Activated T-helper 1 cell treated with anti-CD3 and anti-CD28 coated beads, Interleukin-12 subunit alpha, Interleukin-12 subunit beta, Interleukin-2, Interleukin-4 antibody, amounts not matched to agents 30 ng/mL and 10 ng/mL and 1 ng/mL, durations not matched to agents 14 hours and 24 hours and 36 hours (primary cell): ENCODE measurements at regions of chr11 and their contacts with region 1.

Region 1: GRCh38 chr11:66480117-66480938 is at the start of gene DPP3:
- DNase-seq: peak; percentile 96
- H3K4me3 Mint-ChIP-seq: peak within 1 kb of the TSS; percentile 89
- H3K27ac Mint-ChIP-seq: peak within 1 kb of the TSS; percentile 82
- H3K4me1 Mint-ChIP-seq: peaks cover 44% of the 10 kb centered on the region
- H3K27me3 Mint-ChIP-seq: no peaks in the 10 kb centered on the region
- total RNA-seq, gene DPP3: 102 and 112 TPM in 2 replicates

Region 2: GRCh38 chr11:65859200-65859811 is 621.0 kb before region 1 on chr11:
- intact Hi-C with region 1: no loop called
- DNase-seq: peak; percentile 97
- H3K4me3 Mint-ChIP-seq: peak overlapping the region; percentile 96
- H3K27ac Mint-ChIP-seq: peak overlapping the region; percentile 99
- H3K4me1 Mint-ChIP-seq: peaks cover 49% of the 10 kb centered on the region
- H3K27me3 Mint-ChIP-seq: no peaks in the 10 kb centered on the region

Region 3: GRCh38 chr11:66466225-66467027 is 13.9 kb before region 1 on chr11 and contains the start of gene PELI3:
- intact Hi-C with region 1: loop called (anchors 1 kb)
- DNase-seq: peak; percentile 86
- H3K4me3 Mint-ChIP-seq: peak within 1 kb of the TSS; percentile 94
- H3K27ac Mint-ChIP-seq: peak within 1 kb of the TSS; percentile 88
- H3K4me1 Mint-ChIP-seq: peaks cover 28% of the 10 kb centered on the region
- H3K27me3 Mint-ChIP-seq: no peaks in the 10 kb centered on the region
- total RNA-seq, gene PELI3: 15.3 and 15.8 TPM in 2 replicates

Region 4: DNA sequence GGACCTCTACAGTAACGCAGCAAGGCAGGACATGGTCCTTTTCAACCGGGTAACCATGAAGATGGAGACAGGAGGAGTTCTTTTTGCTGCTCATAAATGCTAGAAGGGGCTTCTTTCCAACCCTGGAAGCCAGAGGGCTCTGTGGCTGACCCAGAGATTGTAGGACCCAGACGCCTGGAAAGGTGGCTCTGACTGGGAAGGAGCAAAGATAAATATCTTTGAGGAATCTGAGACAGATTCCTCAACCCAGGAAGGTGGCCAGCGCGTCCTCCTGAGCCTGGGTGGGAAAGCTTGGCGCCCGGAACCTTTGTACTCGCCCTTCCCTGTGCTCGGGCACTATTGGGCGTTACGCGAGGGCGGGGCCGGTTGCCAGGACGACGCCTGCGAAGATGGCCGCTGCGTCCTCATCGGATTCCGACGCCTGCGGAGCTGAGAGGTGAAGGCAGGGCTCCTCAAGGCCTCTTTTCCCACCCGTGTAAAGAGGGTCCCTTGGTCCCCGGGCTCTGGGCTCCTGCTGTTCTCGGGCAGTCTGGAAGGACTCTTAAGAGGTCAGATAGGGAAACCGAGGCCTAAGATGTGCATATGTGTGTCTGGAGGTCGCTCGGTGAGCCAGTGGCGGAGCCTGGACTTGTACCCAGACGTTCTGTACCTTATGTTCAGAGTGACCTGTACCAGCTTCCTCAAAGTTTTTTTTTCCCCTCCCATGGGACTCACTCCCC is 30.1 kb after region 1 on chr11 and contains the start of gene BBS1:
- intact Hi-C with region 1: loop called (anchors 1 kb)
- DNase-seq: peak; percentile 77
- H3K4me3 Mint-ChIP-seq: peak within 1 kb of the TSS; percentile 90
- H3K27ac Mint-ChIP-seq: peak within 1 kb of the TSS; percentile 61
- H3K4me1 Mint-ChIP-seq: peaks cover 10% of the 10 kb centered on the region
- H3K27me3 Mint-ChIP-seq: no peaks in the 10 kb centered on the region
- total RNA-seq, gene BBS1: 18.0 and 18.1 TPM in 2 replicates

Region 5: GRCh38 chr11:66592457-66593302 is 112.4 kb after region 1 on chr11 and contains the starts of genes CCDC87 and CCS:
- intact Hi-C with region 1: no loop called
- DNase-seq: peak; percentile 96
- H3K4me3 Mint-ChIP-seq: peak within 1 kb of the TSS; percentile 100
- H3K27ac Mint-ChIP-seq: peak within 1 kb of the TSS; percentile 97
- H3K4me1 Mint-ChIP-seq: peaks cover 30% of the 10 kb centered on the region
- H3K27me3 Mint-ChIP-seq: no peaks in the 10 kb centered on the region
- total RNA-seq, gene CCDC87: 0.29 and 0.37 TPM in 2 replicates
- total RNA-seq, gene CCS: 25.3 and 32.1 TPM in 2 replicates

Region 6: DNA sequence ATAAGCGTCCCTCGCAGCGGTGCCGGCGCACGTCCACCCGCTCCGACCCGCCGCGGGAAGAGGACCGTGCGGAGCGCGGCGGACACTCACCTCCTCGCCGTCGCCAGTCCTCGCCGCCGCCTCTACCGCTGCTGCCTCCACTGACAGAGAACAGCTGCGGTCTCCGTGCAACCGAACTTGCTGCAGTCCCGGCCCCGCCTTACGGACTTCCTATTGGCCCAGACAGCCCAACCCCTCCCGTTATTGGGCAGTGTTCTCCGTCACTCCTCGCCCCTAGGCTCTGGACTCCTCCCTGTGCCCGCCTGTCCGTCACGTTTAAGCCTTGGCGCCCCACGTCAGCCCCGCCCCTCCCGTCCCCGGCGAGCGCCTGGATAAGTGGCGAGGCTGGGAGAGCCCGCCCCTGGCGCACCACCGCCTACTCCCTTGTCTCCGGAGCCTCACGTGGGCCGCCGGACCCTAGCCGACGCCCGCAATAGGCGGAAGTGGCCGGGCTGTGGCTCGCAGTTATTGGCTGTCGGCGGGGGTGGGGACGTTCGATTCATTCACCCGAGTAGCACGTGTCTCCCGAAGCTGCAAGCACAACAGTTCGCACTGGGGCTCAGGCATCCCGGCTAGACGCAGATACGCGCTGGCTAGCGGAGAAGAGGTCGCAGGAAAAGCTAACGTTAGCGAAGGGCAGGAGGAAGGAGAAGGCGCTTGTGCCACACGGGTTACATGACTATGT is 478.1 kb after region 1 on chr11 and contains the start of gene PC:
- intact Hi-C with region 1: loop called (anchors 2 kb)
- DNase-seq: peak; percentile 97
- H3K4me3 Mint-ChIP-seq: peak within 1 kb of the TSS; percentile 83
- H3K27ac Mint-ChIP-seq: peak within 1 kb of the TSS; percentile 90
- H3K4me1 Mint-ChIP-seq: peaks cover 29% of the 10 kb centered on the region
- H3K27me3 Mint-ChIP-seq: peaks cover 16% of the 10 kb centered on the region
- total RNA-seq, gene PC: 11.2 and 15.9 TPM in 2 replicates